ENCODE measurements at regions of chr9 and their contacts with region 1.

Region 1: DNA sequence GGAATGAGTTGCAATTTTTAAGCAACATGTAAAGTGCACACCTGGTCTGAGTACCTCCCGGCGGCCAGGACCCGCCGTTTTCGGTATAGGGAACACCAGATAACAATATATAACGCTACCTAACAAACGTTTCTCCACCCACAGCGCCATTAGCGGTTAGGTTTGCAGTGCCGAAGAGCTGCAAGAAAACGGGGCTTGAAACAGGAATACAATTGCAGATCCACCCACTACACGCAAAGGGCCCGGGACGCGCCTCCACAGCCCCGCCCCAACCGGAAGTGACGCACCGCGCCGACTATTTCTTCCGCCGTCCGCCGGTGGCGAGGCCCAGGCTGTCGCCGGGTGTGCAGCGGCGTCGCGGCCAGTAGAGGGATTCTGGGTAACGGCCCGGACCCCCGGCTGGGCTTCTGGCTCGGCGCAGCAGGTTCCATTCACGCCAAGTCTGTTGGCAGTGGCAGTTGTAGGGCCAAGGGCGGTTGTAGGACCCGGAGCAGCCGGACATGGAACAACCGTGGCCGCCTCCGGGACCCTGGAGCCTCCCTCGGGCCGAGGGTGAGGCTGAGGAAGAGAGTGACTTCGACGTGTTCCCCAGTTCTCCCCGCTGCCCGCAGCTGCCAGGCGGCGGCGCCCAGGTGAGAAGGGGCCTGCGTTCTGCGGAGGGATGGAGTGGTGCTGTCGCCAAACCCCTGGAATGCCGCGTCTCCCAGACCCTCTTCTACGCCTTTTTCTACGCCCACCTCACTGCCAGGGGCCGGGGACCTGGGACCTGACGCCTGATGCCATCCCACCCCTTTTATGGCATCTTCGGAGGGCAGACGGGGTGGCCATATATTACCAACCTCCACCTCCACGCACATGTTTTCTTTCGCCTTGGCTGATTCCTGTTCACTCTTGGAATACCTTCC is at the start of gene CDC37L1:
- DNase-seq: peak; percentile 99
- H3K4me3 Mint-ChIP-seq: no peak within 1 kb of the TSS
- H3K27ac Mint-ChIP-seq: no peak within 1 kb of the TSS
- H3K4me1 Mint-ChIP-seq: peaks cover 17% of the 10 kb centered on the region
- H3K27me3 Mint-ChIP-seq: no peaks in the 10 kb centered on the region
- total RNA-seq, gene CDC37L1: 13.7 to 14.5 TPM

Region 2: DNA sequence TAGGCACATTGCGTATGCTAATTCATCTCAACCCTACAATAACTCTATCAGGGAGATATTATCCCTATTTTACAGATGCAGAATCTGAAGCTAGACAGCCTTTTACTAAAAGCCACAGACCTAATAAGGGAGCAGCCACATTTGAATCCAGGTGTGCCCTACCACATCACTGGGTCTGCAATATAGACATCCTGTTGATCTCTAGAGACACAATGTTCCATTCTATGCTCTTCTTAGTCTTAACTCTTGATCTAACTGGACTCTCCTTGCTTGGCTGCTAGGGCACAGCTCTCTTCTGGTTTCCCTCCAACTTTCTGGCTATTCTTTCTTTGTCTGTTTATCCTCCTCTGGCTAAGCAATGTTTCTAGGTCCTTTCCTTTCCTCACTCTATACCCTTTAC is 11.8 kb before region 1 on chr9:
- CTCF ChIA-PET with region 1: interaction called, 4 read pairs
- intact Hi-C with region 1: loop called (anchors 1 kb)
- DNase-seq: no peak
- H3K4me3 Mint-ChIP-seq: no peak overlapping the region
- H3K27ac Mint-ChIP-seq: no peak overlapping the region
- H3K4me1 Mint-ChIP-seq: peaks cover 76% of the 10 kb centered on the region
- H3K27me3 Mint-ChIP-seq: no peaks in the 10 kb centered on the region

Region 3: GRCh38 chr9:4740638-4741364 is 61.3 kb after region 1 on chr9 and contains the start of gene AK3:
- CTCF ChIA-PET with region 1: interaction called, 7 read pairs
- intact Hi-C with region 1: loop called (anchors 1 kb)
- DNase-seq: peak; percentile 90
- H3K4me3 Mint-ChIP-seq: peak within 1 kb of the TSS; percentile 91
- H3K27ac Mint-ChIP-seq: peak within 1 kb of the TSS; percentile 89
- H3K4me1 Mint-ChIP-seq: peaks cover 55% of the 10 kb centered on the region
- H3K27me3 Mint-ChIP-seq: no peaks in the 10 kb centered on the region
- total RNA-seq, gene AK3: 50.2 to 50.9 TPM

Region 4: GRCh38 chr9:5764130-5764868 is 1084.8 kb after region 1 on chr9:
- CTCF ChIA-PET with region 1: no interaction called
- intact Hi-C with region 1: loop called (anchors 10 kb)
- DNase-seq: peak; percentile 55
- H3K4me3 Mint-ChIP-seq: no peak overlapping the region
- H3K27ac Mint-ChIP-seq: peak overlapping the region; percentile 83
- H3K4me1 Mint-ChIP-seq: peaks cover 72% of the 10 kb centered on the region
- H3K27me3 Mint-ChIP-seq: no peaks in the 10 kb centered on the region

Measured in activated naive CD4-positive, alpha-beta T cell treated with anti-CD3 and anti-CD28 coated beads for 36 hours (primary cell).